Activated naive CD4-positive, alpha-beta T cell treated with anti-CD3 and anti-CD28 coated beads, Interleukin-2, amount 10 ng/mL, durations not matched to agents 7 days and 5 days (primary cell): ENCODE measurements at regions of chr1 and their contacts with region 1.

Region 1: DNA sequence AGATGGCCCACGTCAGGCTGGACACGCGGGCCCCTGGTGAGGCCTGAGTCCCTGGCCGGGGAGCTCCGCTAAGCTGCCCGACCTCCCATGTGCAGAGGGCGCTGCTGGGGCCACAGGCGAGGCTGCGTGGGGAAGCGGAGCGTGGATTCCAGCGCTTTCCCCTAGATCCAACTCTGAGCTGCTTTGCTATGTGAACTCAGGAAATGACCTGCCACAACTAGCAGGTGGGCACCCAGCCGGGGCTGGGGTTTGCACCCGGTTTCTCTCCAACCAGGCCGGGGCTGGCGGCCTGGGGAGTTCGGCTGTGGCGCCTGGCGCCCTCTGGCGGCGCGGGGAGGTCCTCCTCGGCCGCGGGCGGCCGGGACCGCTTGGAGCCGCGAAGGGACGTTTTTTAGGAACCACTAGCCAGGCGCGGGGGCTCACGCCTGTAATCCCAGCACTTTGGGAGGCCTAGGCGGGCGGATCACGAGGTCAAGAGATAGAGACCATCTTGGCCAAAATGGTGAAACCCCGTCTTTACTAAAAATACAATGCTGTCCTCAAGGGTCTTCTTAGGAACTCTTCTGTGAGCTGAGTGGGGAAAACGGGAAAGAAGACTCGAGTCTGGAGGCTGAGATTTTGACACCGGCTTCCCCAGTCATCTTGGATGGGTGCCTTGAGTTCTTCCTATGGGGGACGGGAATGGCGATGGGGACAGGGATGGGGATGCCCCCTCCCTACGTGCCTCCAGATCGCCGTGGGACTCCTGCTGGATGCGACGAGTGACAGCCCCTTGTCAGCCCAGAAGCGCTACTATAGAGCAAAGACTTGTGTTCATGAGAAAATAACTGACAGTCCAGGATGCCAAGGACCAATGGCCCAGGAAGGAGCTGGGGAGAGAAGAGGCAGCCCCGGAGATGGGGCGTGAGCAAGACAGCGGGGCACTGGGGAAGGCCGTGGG is 12.6 kb downstream of the PYCR2 start:
- DNase-seq: peak; percentile 78
- H3K4me3 Mint-ChIP-seq: no peak overlapping the region
- H3K27ac Mint-ChIP-seq: no peak overlapping the region
- H3K4me1 Mint-ChIP-seq: peaks cover 21% of the 10 kb centered on the region
- H3K27me3 Mint-ChIP-seq: no peaks in the 10 kb centered on the region

Region 2: GRCh38 chr1:225474986-225475820 is 436.3 kb before region 1 on chr1:
- CTCF ChIA-PET with region 1: interaction called, 12 read pairs
- DNase-seq: peak; percentile 63
- H3K4me3 Mint-ChIP-seq: no peak overlapping the region
- H3K27ac Mint-ChIP-seq: peak overlapping the region; percentile 68
- H3K4me1 Mint-ChIP-seq: peaks cover 67% of the 10 kb centered on the region
- H3K27me3 Mint-ChIP-seq: peaks cover 9% of the 10 kb centered on the region

Region 3: GRCh38 chr1:225480825-225481434 is 430.5 kb before region 1 on chr1:
- CTCF ChIA-PET with region 1: interaction called, 12 read pairs
- DNase-seq: peak; percentile 73
- H3K4me3 Mint-ChIP-seq: no peak overlapping the region
- H3K27ac Mint-ChIP-seq: no peak overlapping the region
- H3K4me1 Mint-ChIP-seq: peaks cover 33% of the 10 kb centered on the region
- H3K27me3 Mint-ChIP-seq: peaks cover 36% of the 10 kb centered on the region